Psoas muscle (tissue), 8 donors: ENCODE measurements at regions of chr2 and their contacts with region 1.

Region 1: GRCh38 chr2:64516628-64517510 is 7.3 kb upstream of the AFTPH start:
- DNase-seq: no peak
- ATAC-seq: no peak
- H3K4me3 ChIP-seq: no peak overlapping the region
- H3K27ac ChIP-seq: no peak overlapping the region
- H3K4me1 ChIP-seq: no peaks in the 10 kb centered on the region
- H3K27me3 ChIP-seq: no peaks in the 10 kb centered on the region
- CTCF ChIP-seq: no peak

Region 2: DNA sequence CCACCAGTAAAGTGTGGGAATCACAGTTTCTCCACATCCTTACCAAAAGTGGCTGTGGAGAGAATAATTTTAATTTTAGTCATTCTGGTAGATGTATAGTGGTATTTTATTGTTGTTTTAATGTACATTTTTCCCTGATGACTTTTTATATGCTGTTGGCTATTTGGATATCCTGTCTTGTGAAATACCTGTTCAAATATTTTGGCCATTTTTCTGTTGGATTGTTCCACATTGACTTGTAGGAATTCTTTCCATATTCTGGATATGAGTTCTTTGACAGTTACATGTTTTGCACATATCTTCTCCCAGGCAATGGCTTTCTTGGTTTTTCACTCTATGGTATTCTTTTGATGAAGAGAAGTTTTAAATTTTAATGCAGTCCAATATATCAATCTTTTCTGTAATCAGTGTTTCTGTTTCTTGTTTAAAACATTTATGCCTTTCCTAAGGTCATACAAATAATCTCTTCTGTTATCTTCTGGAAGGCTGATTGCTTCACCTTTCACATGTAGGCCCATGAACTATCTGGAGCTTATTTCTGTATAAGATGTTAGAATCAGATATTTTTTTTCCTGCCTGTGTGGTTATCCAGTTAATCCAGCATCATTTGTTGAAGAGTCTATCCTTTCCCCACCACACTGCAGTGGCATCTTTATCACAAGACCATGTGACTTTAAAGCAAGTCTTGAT is 26.3 kb after region 1 on chr2:
- intact Hi-C with region 1: no loop called
- DNase-seq: no peak
- ATAC-seq: no peak
- H3K4me3 ChIP-seq: no peak overlapping the region
- H3K27ac ChIP-seq: no peak overlapping the region
- H3K4me1 ChIP-seq: peaks cover 22% of the 10 kb centered on the region
- H3K27me3 ChIP-seq: no peaks in the 10 kb centered on the region
- CTCF ChIP-seq: no peak

Region 3: GRCh38 chr2:64876137-64876647 is 359.3 kb after region 1 on chr2:
- intact Hi-C with region 1: loop called in 1 of 2 experiments (anchors 5 kb)
- DNase-seq: no peak
- ATAC-seq: peak; percentile 21 to 53 (median 40)
- H3K4me3 ChIP-seq: no peak overlapping the region
- H3K27ac ChIP-seq: no peak overlapping the region
- H3K4me1 ChIP-seq: peaks cover 10% of the 10 kb centered on the region
- H3K27me3 ChIP-seq: no peaks in the 10 kb centered on the region
- CTCF ChIP-seq: no peak